Ovary (tissue), 10 donors: ENCODE measurements at regions of chr4 and their contacts with region 1.

Region 1: DNA sequence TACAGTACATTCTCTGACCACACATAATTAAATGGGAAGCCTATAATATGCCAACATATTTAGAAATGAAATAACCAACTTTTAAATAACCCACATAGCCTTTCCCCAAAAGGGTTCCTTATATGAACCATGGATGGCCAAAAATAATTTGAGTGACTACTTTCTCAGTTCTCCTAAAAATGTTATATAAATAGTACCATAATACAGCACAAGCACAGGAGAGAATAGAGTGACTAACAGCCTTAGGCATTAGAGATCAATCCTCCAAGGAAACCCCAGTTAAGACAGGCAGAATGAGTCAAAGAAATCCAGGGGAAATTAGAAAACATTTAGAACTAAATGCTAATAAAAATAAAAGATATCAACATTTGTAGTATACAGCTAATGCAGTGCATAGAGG is 50.2 kb downstream of the ANKRD17 start:
- DNase-seq: no peak
- H3K4me3 ChIP-seq: no peak overlapping the region
- H3K27ac ChIP-seq: no peak overlapping the region
- H3K4me1 ChIP-seq: no peaks in the 10 kb centered on the region
- H3K27me3 ChIP-seq: no peaks in the 10 kb centered on the region
- CTCF ChIP-seq: no peak
- EP300 ChIP-seq: no peak
- POLR2A ChIP-seq: no peak

Region 2: DNA sequence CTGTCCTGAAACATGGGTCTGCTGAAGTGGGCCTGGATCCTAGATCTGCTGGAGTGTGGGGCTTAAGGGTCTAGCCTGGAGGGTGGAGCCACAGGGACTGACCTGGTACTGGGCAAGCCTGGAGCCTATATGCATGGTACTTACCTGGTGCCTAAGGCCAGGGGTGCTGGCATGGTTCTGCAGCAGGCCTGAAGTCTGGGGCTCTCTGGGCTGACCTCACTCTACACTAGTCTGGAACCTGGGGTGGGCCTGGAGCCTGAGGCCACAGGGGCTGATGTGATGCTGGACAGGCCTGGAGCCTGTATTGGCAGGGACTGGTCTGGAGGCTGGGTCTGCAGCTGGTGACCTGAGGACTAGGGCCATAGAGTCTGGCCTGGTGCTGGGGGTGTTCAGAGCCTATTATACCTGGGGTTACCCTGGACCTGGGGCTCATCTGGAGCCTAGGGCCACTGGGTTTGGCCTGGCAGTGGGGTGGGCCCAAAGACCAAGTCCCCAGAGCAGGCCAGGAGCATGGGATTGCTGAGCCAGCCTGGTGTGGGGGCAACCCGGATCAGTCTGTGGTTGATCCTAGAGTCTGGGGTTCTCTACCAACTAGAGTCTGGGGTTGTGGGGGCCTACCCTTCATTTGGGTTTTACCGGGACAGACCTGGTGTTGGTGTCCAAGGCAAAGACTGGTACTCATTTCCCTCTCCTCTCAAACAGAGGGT is 1689.9 kb before region 1 on chr4:
- intact Hi-C with region 1: loop called in 1 of 4 experiments (anchors 10 kb)
- DNase-seq: no peak
- H3K4me3 ChIP-seq: no peak overlapping the region
- H3K27ac ChIP-seq: no peak overlapping the region
- H3K4me1 ChIP-seq: no peaks in the 10 kb centered on the region
- H3K27me3 ChIP-seq: no peaks in the 10 kb centered on the region
- CTCF ChIP-seq: no peak
- EP300 ChIP-seq: no peak
- POLR2A ChIP-seq: no peak

Region 3: GRCh38 chr4:72613959-72614358 is 594.4 kb before region 1 on chr4:
- intact Hi-C with region 1: no loop called
- DNase-seq: no peak
- H3K4me3 ChIP-seq: no peak overlapping the region
- H3K27ac ChIP-seq: no peak overlapping the region
- H3K4me1 ChIP-seq: no peaks in the 10 kb centered on the region
- H3K27me3 ChIP-seq: no peaks in the 10 kb centered on the region
- CTCF ChIP-seq: no peak
- EP300 ChIP-seq: no peak
- POLR2A ChIP-seq: no peak

Region 4: DNA sequence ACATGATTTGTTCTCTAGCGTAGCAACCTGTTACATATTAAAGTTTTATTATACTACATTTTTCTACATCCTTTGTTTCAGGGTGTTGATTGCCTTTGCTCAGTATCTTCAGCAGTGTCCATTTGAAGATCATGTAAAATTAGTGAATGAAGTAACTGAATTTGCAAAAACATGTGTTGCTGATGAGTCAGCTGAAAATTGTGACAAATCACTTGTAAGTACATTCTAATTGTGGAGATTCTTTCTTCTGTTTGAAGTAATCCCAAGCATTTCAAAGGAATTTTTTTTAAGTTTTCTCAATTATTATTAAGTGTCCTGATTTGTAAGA is 198.1 kb after region 1 on chr4:
- intact Hi-C with region 1: no loop called
- DNase-seq: no peak
- H3K4me3 ChIP-seq: no peak overlapping the region
- H3K27ac ChIP-seq: no peak overlapping the region
- H3K4me1 ChIP-seq: no peaks in the 10 kb centered on the region
- H3K27me3 ChIP-seq: no peaks in the 10 kb centered on the region
- CTCF ChIP-seq: no peak
- EP300 ChIP-seq: no peak
- POLR2A ChIP-seq: no peak

Region 5: DNA sequence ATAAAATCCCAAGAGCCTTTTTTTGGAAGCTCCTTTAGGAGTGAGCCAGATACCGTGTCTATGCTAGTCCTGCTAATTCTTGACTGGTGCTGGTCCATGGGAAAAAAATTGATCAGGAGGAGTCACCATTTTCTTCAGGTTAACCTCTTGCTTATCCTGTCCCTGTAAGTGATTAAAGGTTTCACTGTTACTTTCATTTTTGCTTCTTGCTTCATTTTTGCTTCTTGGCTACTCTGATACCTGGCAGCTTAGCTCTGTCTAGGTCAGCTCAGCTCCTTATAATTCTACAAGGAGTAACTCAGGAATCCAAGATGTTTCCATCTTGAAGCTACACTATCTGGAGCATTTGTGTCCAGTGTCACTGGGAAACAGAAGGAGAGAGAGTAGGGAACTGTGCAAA is 318.8 kb after region 1 on chr4:
- intact Hi-C with region 1: no loop called
- DNase-seq: no peak
- H3K4me3 ChIP-seq: no peak overlapping the region
- H3K27ac ChIP-seq: no peak overlapping the region
- H3K4me1 ChIP-seq: no peaks in the 10 kb centered on the region
- H3K27me3 ChIP-seq: no peaks in the 10 kb centered on the region
- CTCF ChIP-seq: no peak
- EP300 ChIP-seq: no peak
- POLR2A ChIP-seq: no peak